ENCODE measurements at regions of chr12 and their contacts with region 1.

Region 1: GRCh38 chr12:94172973-94173372 is 24.6 kb downstream of the PLXNC1 start:
- DNase-seq: no peak
- H3K4me3 ChIP-seq: no peak overlapping the region
- H3K4me3 Mint-ChIP-seq: no peak overlapping the region
- H3K27ac ChIP-seq: no peak overlapping the region
- H3K27ac Mint-ChIP-seq: no peak overlapping the region
- H3K4me1 ChIP-seq: peaks cover 38% of the 10 kb centered on the region
- H3K4me1 Mint-ChIP-seq: peaks cover 31 to 64% (median 51%) of the 10 kb centered on the region in 4 donors
- H3K27me3 ChIP-seq: no peaks in the 10 kb centered on the region
- H3K27me3 Mint-ChIP-seq: no peaks in the 10 kb centered on the region

Region 2: DNA sequence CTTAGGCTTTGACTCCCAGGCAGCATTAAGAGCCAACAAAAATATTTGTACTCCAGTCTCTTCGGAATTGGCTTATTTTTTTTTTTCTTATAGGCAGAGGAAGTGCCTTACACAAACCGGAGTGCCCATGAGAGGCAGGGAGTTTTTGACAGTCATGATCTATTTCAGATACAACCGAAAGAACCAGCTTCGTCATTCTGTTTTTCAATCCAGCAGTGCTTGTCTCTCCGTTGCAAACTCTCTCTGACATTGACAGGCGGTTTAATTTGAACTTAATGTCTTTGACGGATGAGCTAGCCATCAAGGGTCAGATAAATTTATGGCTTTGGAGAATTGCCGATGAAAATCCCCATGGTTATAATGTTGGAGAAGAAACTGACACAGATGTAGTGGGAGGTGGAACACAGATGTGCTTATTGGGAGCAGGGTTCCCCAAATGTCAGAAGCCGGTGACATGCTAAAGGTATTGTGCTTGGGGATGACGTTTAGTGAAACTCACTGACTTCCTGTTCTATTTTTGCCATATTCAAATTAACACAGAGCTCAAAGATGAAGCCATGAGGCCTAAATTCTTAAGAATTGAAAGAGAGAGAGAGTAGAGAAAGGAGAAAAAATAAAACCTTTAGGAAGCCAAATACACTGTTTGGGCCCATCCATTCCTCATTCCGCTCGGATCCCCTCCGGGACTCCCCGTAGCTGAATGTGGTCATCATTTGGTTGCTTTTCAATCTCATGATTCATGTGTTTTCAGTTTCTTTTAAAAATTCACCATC is 35.1 kb after region 1 on chr12:
- CTCF ChIA-PET with region 1: interaction called, 3 read pairs
- POLR2A ChIA-PET with region 1: interaction called, 5 read pairs
- intact Hi-C with region 1: loop called (anchors 5 kb)
- DNase-seq: peak; percentile 45 to 69 (median 56)
- H3K4me3 ChIP-seq: peak overlapping the region; percentile 25 to 51
- H3K4me3 Mint-ChIP-seq: peak overlapping the region; percentile 78 to 93 (median 84)
- H3K27ac ChIP-seq: peak overlapping the region; percentile 67
- H3K27ac Mint-ChIP-seq: peak overlapping the region; percentile 89 to 98 (median 96)
- H3K4me1 ChIP-seq: peaks cover 59% of the 10 kb centered on the region
- H3K4me1 Mint-ChIP-seq: peaks cover 47 to 68% (median 55%) of the 10 kb centered on the region in 4 donors
- H3K27me3 ChIP-seq: no peaks in the 10 kb centered on the region
- H3K27me3 Mint-ChIP-seq: no peaks in the 10 kb centered on the region

Region 3: DNA sequence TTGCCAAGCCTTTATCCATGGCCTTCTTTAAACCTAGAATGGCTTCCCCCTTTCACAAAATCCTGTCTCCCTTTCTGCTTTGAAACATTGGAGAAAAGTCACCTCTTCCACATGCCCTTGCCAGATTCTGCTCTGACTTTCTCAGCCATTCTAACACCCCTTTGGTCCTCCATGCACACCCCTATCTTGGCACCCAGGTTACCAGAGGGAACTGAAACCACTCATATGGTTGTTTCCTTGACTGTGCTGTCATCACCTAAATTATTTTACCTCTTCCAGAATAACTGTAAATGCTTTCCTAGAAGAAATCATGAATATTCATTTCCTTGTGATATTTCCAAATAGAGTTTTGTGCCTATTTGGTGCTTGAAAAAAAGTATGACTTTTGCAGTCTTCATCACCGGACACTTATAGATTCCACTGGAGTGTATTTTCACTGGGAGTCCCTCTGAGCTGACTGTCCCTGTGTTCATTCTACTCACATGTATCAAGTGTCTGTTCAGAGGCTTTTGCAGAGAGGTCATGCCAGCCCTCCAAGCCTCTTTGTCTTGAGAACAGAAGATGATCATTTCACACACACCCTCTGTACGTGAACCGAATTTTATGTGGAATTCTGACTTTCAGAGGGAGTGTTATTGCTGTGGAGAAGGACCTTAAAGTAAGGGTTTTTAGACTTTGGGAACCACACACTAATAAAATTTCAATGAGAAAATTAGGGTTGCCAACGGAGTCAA is 49.5 kb after region 1 on chr12:
- CTCF ChIA-PET with region 1: no interaction called
- POLR2A ChIA-PET with region 1: no interaction called
- intact Hi-C with region 1: no loop called
- DNase-seq: no peak
- H3K4me3 ChIP-seq: no peak overlapping the region
- H3K4me3 Mint-ChIP-seq: no peak overlapping the region
- H3K27ac ChIP-seq: no peak overlapping the region
- H3K27ac Mint-ChIP-seq: peak overlapping the region in 2 of 7 donors; percentile 25 to 69
- H3K4me1 ChIP-seq: no peaks in the 10 kb centered on the region
- H3K4me1 Mint-ChIP-seq: peaks cover 0 to 1% (median 0%) of the 10 kb centered on the region in 4 donors
- H3K27me3 ChIP-seq: no peaks in the 10 kb centered on the region
- H3K27me3 Mint-ChIP-seq: no peaks in the 10 kb centered on the region

Region 4: GRCh38 chr12:94340573-94340972 is 167.6 kb after region 1 on chr12:
- CTCF ChIA-PET with region 1: no interaction called
- POLR2A ChIA-PET with region 1: no interaction called
- intact Hi-C with region 1: no loop called
- DNase-seq: no peak
- H3K4me3 ChIP-seq: no peak overlapping the region
- H3K4me3 Mint-ChIP-seq: no peak overlapping the region
- H3K27ac ChIP-seq: no peak overlapping the region
- H3K27ac Mint-ChIP-seq: no peak overlapping the region
- H3K4me1 ChIP-seq: no peaks in the 10 kb centered on the region
- H3K4me1 Mint-ChIP-seq: no peaks in the 10 kb centered on the region
- H3K27me3 ChIP-seq: no peaks in the 10 kb centered on the region
- H3K27me3 Mint-ChIP-seq: no peaks in the 10 kb centered on the region